ENCODE measurements at regions of chr9 and their contacts with region 1.

Region 1: GRCh38 chr9:29211580-29212396 is 1638.5 kb upstream of the C9orf72 start:
- DNase-seq: peak; percentile 50
- ATAC-seq: peak; percentile 90 to 92
- H3K4me3 ChIP-seq: peak overlapping the region; percentile 39
- H3K27ac ChIP-seq: no peak overlapping the region
- H3K4me1 ChIP-seq: peaks cover 13% of the 10 kb centered on the region
- H3K27me3 ChIP-seq: peaks cover 55% of the 10 kb centered on the region
- CTCF ChIP-seq: peak; percentile 62

Region 2: DNA sequence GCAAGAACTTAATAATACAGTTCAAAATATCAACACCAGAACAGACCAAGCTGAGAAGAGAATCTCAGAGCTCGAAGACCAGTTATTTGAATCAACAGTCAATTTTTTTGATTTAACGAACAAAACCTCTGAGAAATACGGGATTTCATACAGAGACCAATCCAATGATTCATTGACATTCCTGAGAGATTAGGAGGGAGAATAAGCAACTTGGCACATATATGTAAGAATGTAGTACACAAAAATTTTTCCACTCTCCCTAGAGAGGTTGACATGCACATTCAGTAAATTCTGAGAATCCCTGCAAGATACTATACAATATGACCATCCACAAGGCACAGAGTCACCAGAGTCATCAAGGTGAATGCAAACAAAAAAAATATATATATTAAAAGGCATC is 61.2 kb before region 1 on chr9:
- intact Hi-C with region 1: loop called (anchors 10 kb)
- DNase-seq: no peak
- ATAC-seq: no peak
- H3K4me3 ChIP-seq: no peak overlapping the region
- H3K27ac ChIP-seq: no peak overlapping the region
- H3K4me1 ChIP-seq: no peaks in the 10 kb centered on the region
- H3K27me3 ChIP-seq: no peaks in the 10 kb centered on the region
- CTCF ChIP-seq: no peak

Region 3: GRCh38 chr9:29285818-29286217 is 74.0 kb after region 1 on chr9:
- intact Hi-C with region 1: no loop called
- DNase-seq: no peak
- ATAC-seq: no peak
- H3K4me3 ChIP-seq: no peak overlapping the region
- H3K27ac ChIP-seq: no peak overlapping the region
- H3K4me1 ChIP-seq: no peaks in the 10 kb centered on the region
- H3K27me3 ChIP-seq: no peaks in the 10 kb centered on the region
- CTCF ChIP-seq: no peak